Activated naive CD4-positive, alpha-beta T cell treated with anti-CD3 and anti-CD28 coated beads for 36 hours (primary cell): ENCODE measurements at regions of chr18 and their contacts with region 1.

Region 1: GRCh38 chr18:12038639-12039417 is 54.8 kb upstream of the ANKRD62 start:
- DNase-seq: peak; percentile 76
- H3K4me3 Mint-ChIP-seq: peak overlapping the region; percentile 48
- H3K27ac Mint-ChIP-seq: no peak overlapping the region
- H3K4me1 Mint-ChIP-seq: peaks cover 10% of the 10 kb centered on the region
- H3K27me3 Mint-ChIP-seq: peaks cover 5% of the 10 kb centered on the region

Region 2: DNA sequence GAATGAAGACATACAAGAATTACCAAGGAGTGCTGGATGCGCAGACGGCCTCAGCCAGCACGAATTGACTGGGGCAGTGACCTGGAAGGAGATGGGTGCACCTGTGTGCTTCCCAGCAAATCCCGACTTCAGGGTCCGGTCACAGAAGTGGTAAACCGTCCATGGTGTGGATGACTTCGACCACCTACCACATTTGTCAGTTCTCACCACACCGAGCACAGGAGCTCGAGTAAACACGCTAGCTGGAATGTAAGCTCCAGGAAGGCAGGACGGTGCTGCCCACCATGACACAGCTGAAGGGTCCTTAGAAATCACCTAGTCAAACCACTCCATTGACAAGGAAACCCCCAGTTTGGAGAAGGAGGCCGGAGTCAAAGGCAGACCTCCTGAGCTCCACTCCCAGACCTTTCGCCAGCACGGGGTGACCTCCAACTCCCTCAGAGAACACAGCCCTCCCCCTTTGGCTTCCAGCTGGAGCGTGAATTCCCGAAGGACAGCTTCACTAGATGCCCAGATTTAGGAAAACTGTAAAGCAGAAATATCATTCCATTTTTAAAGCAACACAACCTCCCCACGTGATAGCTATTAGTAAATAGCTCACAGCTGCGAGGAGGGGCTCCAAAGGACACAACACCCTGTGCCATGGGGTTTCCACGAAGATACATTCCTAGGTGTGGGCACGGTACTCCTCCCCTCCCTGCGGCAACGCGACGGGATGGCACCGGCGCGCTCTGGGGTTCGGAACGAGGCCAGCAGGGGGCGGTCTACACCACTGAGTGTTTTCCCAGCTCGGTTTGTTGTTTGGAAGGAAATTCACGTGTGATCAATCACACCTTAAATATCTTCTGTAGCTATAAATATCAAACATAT is 383.9 kb before region 1 on chr18:
- CTCF ChIA-PET with region 1: interaction called, 14 read pairs
- intact Hi-C with region 1: loop called (anchors 1 kb)
- DNase-seq: peak; percentile 71
- H3K4me3 Mint-ChIP-seq: no peak overlapping the region
- H3K27ac Mint-ChIP-seq: no peak overlapping the region
- H3K4me1 Mint-ChIP-seq: peaks cover 6% of the 10 kb centered on the region
- H3K27me3 Mint-ChIP-seq: peaks cover 39% of the 10 kb centered on the region

Region 3: GRCh38 chr18:11695736-11696135 is 343.1 kb before region 1 on chr18:
- CTCF ChIA-PET with region 1: no interaction called
- intact Hi-C with region 1: no loop called
- DNase-seq: no peak
- H3K4me3 Mint-ChIP-seq: no peak overlapping the region
- H3K27ac Mint-ChIP-seq: no peak overlapping the region
- H3K4me1 Mint-ChIP-seq: no peaks in the 10 kb centered on the region
- H3K27me3 Mint-ChIP-seq: peaks cover 34% of the 10 kb centered on the region